ENCODE measurements at regions of chr9 and their contacts with region 1.

Region 1: GRCh38 chr9:2179567-2179966 is 164.4 kb downstream of the SMARCA2 start:
- DNase-seq: no peak
- ATAC-seq: no peak
- H3K4me3 ChIP-seq: no peak overlapping the region
- H3K27ac ChIP-seq: no peak overlapping the region
- H3K4me1 ChIP-seq: no peaks in the 10 kb centered on the region
- H3K27me3 ChIP-seq: no peaks in the 10 kb centered on the region

Region 2: GRCh38 chr9:2023532-2023931 is 156.0 kb before region 1 on chr9:
- intact Hi-C with region 1: loop called in 1 of 2 experiments (anchors 10 kb)
- DNase-seq: no peak
- ATAC-seq: no peak
- H3K4me3 ChIP-seq: peak overlapping the region in 1 of 2 donors; percentile 5
- H3K27ac ChIP-seq: no peak overlapping the region
- H3K4me1 ChIP-seq: peaks cover 3 to 20% of the 10 kb centered on the region in 2 donors
- H3K27me3 ChIP-seq: no peaks in the 10 kb centered on the region

Region 3: DNA sequence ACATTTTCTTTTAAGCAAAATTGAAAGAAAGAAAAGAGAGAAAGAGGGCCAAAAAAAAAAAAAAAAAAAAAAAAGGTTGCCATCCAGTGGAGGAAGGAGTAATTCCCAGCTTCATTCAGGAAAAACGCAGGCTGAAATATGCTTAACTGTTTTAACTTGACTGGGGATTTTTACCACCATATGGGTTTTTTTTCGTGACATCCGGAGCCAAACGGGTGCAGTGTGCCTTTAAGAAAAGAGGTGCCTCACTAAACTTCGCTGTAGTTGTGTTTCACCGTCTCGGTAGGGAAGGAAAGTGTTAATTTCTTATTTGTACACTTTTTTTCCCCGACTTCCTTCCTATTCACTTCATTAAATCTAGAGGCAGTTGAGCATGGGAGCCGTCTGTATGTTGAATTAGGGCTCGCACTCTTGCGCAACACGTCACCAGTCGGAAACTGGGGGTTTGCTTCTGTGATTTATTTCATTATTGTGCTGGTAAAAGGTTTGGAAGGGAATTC is 21.4 kb before region 1 on chr9:
- intact Hi-C with region 1: no loop called
- DNase-seq: peak in 1 of 2 donors; percentile 65
- ATAC-seq: peak; percentile 67
- H3K4me3 ChIP-seq: peak overlapping the region; percentile 91 to 96
- H3K27ac ChIP-seq: peak overlapping the region; percentile 52 to 89
- H3K4me1 ChIP-seq: no peaks in the 10 kb centered on the region
- H3K27me3 ChIP-seq: no peaks in the 10 kb centered on the region